Esophagus muscularis mucosa (tissue), 4 donors: ENCODE measurements at regions of chr10 and their contacts with region 1.

Region 1: DNA sequence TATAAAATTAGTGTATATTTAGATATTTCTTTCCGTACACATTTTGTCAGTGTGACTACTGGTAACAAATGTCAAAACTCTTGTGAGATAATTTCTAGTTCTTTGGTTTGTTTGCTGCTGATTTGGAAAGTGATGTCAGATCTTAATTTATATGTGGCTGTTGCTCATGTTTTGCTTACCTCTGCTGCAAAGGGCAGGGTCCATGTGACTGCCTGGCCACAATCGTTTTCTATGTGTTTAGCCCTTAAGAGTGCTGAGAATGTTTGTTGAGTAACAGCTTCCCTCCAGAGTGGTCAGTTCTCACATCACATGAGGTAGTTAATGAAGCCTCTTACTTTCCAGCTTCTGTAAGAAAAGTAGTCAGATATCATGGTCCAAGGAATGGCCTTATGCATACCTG is 4.2 kb downstream of the NRBF2 start:
- DNase-seq: no peak
- H3K4me3 ChIP-seq: no peak overlapping the region
- H3K27ac ChIP-seq: no peak overlapping the region
- H3K4me1 ChIP-seq: peaks cover 23 to 45% (median 36%) of the 10 kb centered on the region in 4 donors
- H3K27me3 ChIP-seq: no peaks in the 10 kb centered on the region
- CTCF ChIP-seq: no peak
- EP300 ChIP-seq: no peak
- POLR2A ChIP-seq: no peak

Region 2: GRCh38 chr10:62804356-62805230 is 332.7 kb before region 1 on chr10 and contains the start of gene ADO:
- intact Hi-C with region 1: loop called (anchors 5 kb)
- DNase-seq: peak; percentile 94
- H3K4me3 ChIP-seq: peak within 1 kb of the TSS; percentile 75 to 97 (median 90)
- H3K27ac ChIP-seq: peak within 1 kb of the TSS; percentile 94 to 98 (median 94)
- H3K4me1 ChIP-seq: peaks cover 19 to 54% (median 44%) of the 10 kb centered on the region in 4 donors
- H3K27me3 ChIP-seq: no peaks in the 10 kb centered on the region
- CTCF ChIP-seq: no peak
- EP300 ChIP-seq: no peak
- POLR2A ChIP-seq: peak; percentile 65
- total RNA-seq, gene ADO: 19.5 to 28.1 (median 23.4) TPM